ENCODE measurements at regions of chr7 and their contacts with region 1.

Region 1: DNA sequence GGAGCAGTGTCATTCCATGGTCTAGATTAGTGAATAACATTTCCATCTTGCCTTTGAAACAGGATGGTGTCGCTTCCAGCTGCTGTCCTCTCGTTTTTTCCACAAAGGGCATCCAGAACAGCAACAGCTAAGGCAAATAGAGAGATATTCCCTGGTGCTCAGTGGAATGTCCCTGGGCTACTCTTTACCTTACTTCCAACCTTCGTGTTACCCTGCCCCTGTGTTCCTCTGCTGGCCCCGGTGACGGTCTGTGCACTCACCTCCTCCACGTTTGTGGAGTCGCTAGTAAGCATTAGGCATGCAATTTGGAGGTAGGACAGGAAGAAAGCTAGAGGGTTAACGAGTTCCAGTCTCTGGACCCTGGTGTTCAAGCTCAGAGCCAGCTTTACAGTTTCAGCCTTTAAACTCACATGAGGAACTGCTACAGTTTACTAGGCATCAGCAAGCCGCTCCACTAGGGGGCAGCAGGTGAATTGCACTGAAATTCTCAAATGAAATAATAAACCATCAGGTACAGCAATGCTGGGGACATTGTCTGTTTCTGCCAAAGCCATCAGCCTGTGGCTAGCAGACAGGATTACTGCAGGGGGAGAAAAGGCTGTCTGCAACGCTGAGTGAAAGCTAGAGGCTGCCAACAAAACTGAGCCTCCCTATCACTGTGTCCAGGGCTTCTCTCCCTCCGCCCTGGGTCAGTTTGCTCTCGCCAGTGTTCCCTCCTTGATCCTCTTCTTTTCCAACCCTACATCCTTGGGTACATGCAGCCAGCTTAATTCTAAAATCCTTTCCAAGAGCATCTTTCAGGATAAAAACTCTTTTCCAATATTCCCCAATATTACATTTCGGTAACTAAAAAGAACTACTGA is 9.0 kb downstream of the MRPL32 start:
- DNase-seq: no peak
- H3K4me3 ChIP-seq: no peak overlapping the region
- H3K27ac ChIP-seq: no peak overlapping the region
- H3K4me1 ChIP-seq: no peaks in the 10 kb centered on the region
- H3K27me3 ChIP-seq: no peaks in the 10 kb centered on the region
- CTCF ChIP-seq: peak; percentile 53 to 92 (median 78)
- POLR2A ChIP-seq: no peak

Region 2: DNA sequence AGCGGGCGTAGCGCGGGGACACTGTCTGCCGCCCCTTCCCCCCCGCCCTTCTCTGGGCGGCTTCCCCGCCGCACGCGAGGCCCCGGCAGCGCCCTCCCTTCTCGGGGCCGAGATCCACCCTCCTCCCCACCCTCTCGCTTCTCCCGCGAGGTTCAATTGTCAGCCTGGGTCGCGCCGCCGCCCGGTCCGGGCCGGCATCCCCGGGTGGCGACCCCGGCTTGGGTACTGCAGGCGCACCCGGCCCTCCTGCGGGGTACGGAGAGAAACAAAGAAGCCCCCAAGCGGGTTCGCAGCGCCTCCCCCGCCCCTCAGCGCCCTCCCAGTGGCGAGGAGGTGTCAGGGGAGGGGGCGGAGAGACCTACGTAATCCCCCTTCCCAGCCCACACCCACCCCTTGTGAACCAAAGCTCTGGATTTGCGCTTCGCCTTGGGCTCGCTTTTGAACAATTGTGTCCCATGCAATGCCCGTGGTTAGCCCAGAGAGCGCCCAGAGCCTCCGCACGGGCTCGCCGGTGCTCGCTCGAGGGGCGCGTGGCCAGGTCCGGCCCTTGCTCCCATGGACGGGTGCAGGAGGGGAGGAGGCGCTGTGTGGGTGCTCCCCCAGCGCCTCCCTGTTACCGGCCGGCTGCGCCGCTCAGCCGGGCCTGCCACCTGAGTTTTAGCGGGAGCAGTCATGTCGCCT is 171.9 kb after region 1 on chr7:
- intact Hi-C with region 1: loop called (anchors 10 kb)
- DNase-seq: no peak
- H3K4me3 ChIP-seq: peak overlapping the region; percentile 16 to 65 (median 39)
- H3K27ac ChIP-seq: no peak overlapping the region
- H3K4me1 ChIP-seq: peaks cover 15 to 22% (median 22%) of the 10 kb centered on the region in 3 donors
- H3K27me3 ChIP-seq: peaks cover 10 to 88% (median 27%) of the 10 kb centered on the region in 4 donors
- CTCF ChIP-seq: no peak
- POLR2A ChIP-seq: no peak

Region 3: DNA sequence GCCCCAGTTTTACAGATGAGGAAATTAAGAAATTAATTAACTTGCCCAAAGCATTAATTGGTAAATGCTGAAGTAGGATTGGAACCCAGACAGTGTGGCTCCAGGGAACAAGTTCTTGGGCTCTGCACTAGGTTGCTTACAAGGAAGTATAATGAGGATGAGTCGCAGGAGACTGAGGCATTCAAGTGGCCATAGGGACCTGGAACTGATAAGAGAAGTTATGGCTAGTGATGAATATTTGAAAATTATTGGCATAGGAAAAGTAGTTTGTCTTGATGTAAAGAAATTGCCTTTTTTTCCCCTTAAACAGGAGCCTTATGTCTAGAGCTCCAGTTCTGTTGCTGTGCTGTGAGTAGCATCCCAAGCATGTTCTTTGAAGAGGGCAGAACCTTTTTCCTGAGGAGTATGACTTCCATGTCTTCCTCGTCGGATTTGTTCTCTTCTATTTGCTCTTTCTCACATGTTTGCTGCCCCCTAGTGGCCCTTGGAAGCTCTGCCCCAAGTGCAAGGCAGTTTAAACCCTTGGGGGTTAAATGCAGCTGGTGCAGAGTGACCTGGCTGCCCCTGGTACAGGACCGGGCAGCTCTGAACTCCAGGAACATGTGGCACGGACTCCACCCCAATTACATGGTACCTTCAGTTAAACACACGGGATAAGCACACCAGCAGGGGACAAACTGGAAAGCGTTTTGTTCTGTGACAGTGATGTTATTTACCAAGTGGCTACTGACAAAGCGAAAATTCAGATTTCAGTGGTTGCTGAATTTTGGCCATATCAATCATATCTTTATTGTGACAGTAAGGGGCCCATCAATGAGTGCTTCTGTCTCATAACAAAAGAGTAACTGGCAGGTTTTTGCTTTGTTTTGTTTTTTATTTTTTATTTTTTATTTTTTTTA is 320.0 kb after region 1 on chr7:
- intact Hi-C with region 1: loop called (anchors 5 kb)
- DNase-seq: no peak
- H3K4me3 ChIP-seq: no peak overlapping the region
- H3K27ac ChIP-seq: no peak overlapping the region
- H3K4me1 ChIP-seq: no peaks in the 10 kb centered on the region
- H3K27me3 ChIP-seq: peaks cover 0 to 6% (median 0%) of the 10 kb centered on the region in 4 donors
- CTCF ChIP-seq: peak; percentile 78 to 93 (median 86)
- POLR2A ChIP-seq: no peak

Measured in esophagus squamous epithelium (tissue), 5 donors.